ENCODE measurements at regions of chr10 and their contacts with region 1.

Region 1: DNA sequence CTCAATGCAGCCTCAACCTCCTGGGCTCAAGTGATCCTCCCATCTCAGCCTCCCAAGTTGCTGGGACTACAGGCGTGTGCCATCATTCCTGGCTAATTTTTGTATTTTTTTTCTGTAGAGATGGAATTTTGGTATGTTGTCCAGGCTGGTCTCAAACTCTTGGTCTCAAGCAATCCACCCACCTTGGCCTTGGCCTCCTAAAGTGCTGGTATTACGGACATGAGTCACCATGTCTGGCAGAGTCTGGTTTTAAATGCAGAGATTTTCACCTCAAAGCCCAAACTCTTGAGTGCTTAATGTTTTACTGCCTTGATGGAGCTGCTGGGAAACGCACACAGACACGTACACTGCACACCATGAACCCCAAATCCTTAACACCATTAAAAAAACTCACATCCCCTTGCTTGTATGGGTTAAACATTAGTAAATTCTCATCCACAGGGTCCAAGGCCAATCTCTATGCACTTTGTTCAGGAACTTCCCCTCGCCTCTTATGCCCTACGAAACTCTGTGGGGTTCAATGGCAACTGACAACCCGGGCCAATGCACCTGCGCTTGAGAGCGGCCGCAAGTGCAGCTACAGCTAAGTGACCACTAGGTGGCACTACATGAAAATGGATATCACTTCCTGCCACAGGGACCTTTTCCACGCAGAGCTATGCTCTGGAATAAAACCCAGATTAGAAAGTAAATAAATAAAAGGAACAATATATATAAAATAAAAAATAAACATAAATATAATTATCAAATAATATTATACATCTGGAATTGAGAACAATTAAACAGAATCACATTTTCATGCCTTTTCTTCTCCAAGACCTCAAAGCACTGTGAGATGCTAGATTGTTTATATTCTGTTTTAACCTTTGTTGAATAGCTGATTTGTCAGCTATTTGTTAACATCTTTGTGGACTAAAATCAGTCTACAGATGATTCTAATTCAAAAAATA is 66.9 kb upstream of the AFAP1L2 start:
- DNase-seq: peak; percentile 32 to 87 (median 59)
- ATAC-seq: peak; percentile 82 to 88 (median 84)
- H3K4me3 ChIP-seq: no peak overlapping the region
- H3K4me3 Mint-ChIP-seq: peak overlapping the region in 1 of 3 donors; percentile 10
- H3K27ac ChIP-seq: peak overlapping the region; percentile 20
- H3K27ac Mint-ChIP-seq: peak overlapping the region; percentile 58 to 75
- H3K4me1 ChIP-seq: peaks cover 0 to 10% of the 10 kb centered on the region in 2 experiments
- H3K4me1 Mint-ChIP-seq: peaks cover 36 to 44% (median 42%) of the 10 kb centered on the region in 3 donors
- H3K27me3 ChIP-seq: no peaks in the 10 kb centered on the region
- H3K27me3 Mint-ChIP-seq: no peaks in the 10 kb centered on the region

Region 2: GRCh38 chr10:114412907-114413386 is 58.3 kb before region 1 on chr10:
- CTCF ChIA-PET with region 1: no interaction called
- POLR2A ChIA-PET with region 1: no interaction called
- DNase-seq: no peak
- ATAC-seq: no peak
- H3K4me3 ChIP-seq: no peak overlapping the region
- H3K4me3 Mint-ChIP-seq: no peak overlapping the region
- H3K27ac ChIP-seq: no peak overlapping the region
- H3K27ac Mint-ChIP-seq: no peak overlapping the region
- H3K4me1 ChIP-seq: no peaks in the 10 kb centered on the region
- H3K4me1 Mint-ChIP-seq: no peaks in the 10 kb centered on the region
- H3K27me3 ChIP-seq: peaks cover 0 to 13% of the 10 kb centered on the region in 2 experiments
- H3K27me3 Mint-ChIP-seq: peaks cover 27 to 28% of the 10 kb centered on the region in 2 donors

Region 3: DNA sequence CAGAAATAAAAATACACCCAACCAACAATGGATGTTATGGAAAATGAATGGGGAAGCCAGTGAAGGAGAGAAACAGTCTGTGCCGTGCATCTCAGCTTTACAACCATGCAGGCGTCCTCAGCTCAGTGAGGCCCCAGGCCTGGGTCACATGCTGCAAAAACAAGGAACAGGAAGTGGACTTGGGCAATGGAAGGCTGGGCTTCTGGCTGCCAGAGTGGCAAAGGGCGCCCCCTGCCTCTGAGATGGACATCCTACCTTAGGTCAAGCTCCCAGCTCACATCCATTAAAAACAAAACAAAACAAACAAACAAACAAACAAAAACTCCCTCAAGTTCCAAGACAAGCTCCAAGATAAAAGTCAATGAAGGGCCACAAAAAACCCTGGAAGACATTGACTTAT is 12.3 kb before region 1 on chr10:
- CTCF ChIA-PET with region 1: interaction called, 5 to 10 read pairs
- POLR2A ChIA-PET with region 1: no interaction called
- DNase-seq: peak in 5 of 35 experiments; percentile 2 to 26 (median 5)
- ATAC-seq: peak in 1 of 4 experiments; percentile 40
- H3K4me3 ChIP-seq: no peak overlapping the region
- H3K4me3 Mint-ChIP-seq: no peak overlapping the region
- H3K27ac ChIP-seq: no peak overlapping the region
- H3K27ac Mint-ChIP-seq: no peak overlapping the region
- H3K4me1 ChIP-seq: no peaks in the 10 kb centered on the region
- H3K4me1 Mint-ChIP-seq: peaks cover 22 to 28% (median 27%) of the 10 kb centered on the region in 3 donors
- H3K27me3 ChIP-seq: no peaks in the 10 kb centered on the region
- H3K27me3 Mint-ChIP-seq: no peaks in the 10 kb centered on the region

Region 4: DNA sequence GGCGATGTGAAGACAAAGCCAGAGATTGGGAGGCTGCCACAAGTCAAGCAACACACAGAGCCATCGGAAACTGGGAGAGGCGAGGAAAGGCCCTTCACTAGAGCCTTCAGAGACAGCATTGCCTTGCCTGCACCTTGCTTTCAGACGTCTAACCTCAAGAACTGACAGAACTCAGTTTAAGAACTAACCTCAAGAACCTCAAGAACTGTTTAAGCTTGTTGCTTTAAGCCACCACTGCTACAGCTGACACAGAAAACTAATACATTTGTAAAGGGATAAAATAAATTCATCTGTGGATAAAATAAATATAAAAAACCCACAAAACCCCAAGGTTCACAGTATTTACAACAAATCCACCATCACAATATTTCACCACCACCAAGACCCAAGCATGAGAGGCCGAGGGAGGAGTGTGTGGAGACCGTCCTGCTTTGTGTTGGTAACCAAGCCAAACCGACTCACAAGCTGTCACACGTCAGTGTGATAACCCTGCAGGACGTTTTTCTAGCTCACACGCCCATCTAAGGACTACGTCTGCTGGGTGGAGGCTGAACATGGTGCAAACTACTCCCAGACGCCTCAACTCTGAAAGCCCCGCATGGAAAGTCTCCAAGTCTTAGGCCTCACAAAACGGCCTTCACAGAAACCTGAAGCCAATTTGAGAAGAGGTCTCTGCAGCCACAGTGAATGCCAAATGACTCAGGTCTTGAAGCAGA is 70.0 kb after region 1 on chr10:
- CTCF ChIA-PET with region 1: interaction called in 1 of 2 experiments, 19 read pairs
- POLR2A ChIA-PET with region 1: interaction called in 1 of 2 experiments, 5 read pairs
- DNase-seq: peak in 34 of 35 experiments; percentile 61 to 92 (median 77)
- ATAC-seq: peak; percentile 74 to 82 (median 78)
- H3K4me3 ChIP-seq: peak overlapping the region; percentile 8 to 11
- H3K4me3 Mint-ChIP-seq: peak overlapping the region; percentile 28 to 82 (median 37)
- H3K27ac ChIP-seq: peak overlapping the region; percentile 98
- H3K27ac Mint-ChIP-seq: peak overlapping the region; percentile 93 to 95
- H3K4me1 ChIP-seq: peaks cover 75 to 84% of the 10 kb centered on the region in 2 experiments
- H3K4me1 Mint-ChIP-seq: peaks cover 92 to 95% (median 92%) of the 10 kb centered on the region in 3 donors
- H3K27me3 ChIP-seq: no peaks in the 10 kb centered on the region
- H3K27me3 Mint-ChIP-seq: no peaks in the 10 kb centered on the region

Region 5: GRCh38 chr10:114703377-114704107 is 232.3 kb after region 1 on chr10:
- CTCF ChIA-PET with region 1: interaction called, 3 to 16 read pairs
- POLR2A ChIA-PET with region 1: no interaction called
- DNase-seq: peak in 16 of 35 experiments; percentile 2 to 55 (median 10)
- ATAC-seq: peak; percentile 38 to 57 (median 44)
- H3K4me3 ChIP-seq: no peak overlapping the region
- H3K4me3 Mint-ChIP-seq: no peak overlapping the region
- H3K27ac ChIP-seq: no peak overlapping the region
- H3K27ac Mint-ChIP-seq: no peak overlapping the region
- H3K4me1 ChIP-seq: no peaks in the 10 kb centered on the region
- H3K4me1 Mint-ChIP-seq: no peaks in the 10 kb centered on the region
- H3K27me3 ChIP-seq: peaks cover 0 to 3% of the 10 kb centered on the region in 2 experiments
- H3K27me3 Mint-ChIP-seq: peaks cover 0 to 18% of the 10 kb centered on the region in 2 donors

Region 6: GRCh38 chr10:114821293-114821914 is 350.2 kb after region 1 on chr10 and contains the start of gene FHIP2A:
- CTCF ChIA-PET with region 1: interaction called, 6 to 18 read pairs
- POLR2A ChIA-PET with region 1: interaction called in 1 of 2 experiments, 3 read pairs
- DNase-seq: peak; percentile 60 to 91 (median 76)
- ATAC-seq: peak; percentile 91 to 95 (median 92)
- H3K4me3 ChIP-seq: peak within 1 kb of the TSS; percentile 80 to 95
- H3K4me3 Mint-ChIP-seq: peak within 1 kb of the TSS; percentile 94 to 96 (median 95)
- H3K27ac ChIP-seq: peak within 1 kb of the TSS; percentile 83
- H3K27ac Mint-ChIP-seq: peak within 1 kb of the TSS; percentile 94 to 96
- H3K4me1 ChIP-seq: peaks cover 12 to 13% of the 10 kb centered on the region in 2 experiments
- H3K4me1 Mint-ChIP-seq: peaks cover 36 to 48% (median 36%) of the 10 kb centered on the region in 3 donors
- H3K27me3 ChIP-seq: no peaks in the 10 kb centered on the region
- H3K27me3 Mint-ChIP-seq: no peaks in the 10 kb centered on the region
- total RNA-seq, gene FHIP2A: 27.0 to 37.0 (median 31.9) TPM

Measured in T-cell (primary cell).